PC-9 (cell line): ENCODE measurements at regions of chr3 and their contacts with region 1.

Region 1: DNA sequence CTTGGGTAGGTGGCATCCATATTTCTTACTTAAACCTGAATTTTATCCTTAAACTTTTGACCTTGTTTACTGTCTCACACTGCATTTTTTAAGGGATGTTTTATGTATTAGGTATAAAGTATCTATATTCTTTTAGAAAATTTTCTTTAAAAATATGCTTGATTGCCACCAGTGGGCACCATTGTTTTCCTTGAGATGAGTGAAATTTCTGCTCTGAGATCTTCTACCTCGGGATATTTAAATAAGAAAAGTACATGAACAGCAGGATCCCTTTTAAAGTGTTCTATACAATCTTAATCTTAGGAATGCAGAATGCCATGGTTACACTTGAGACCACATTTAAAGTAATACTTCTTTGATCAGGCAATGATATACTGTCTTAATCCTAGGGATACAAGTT is 108.7 kb downstream of the SLMAP start:
- DNase-seq: no peak
- H3K4me3 ChIP-seq: no peak overlapping the region
- H3K27ac ChIP-seq: 0 out of 2 replicates have a peak overlapping the region, but pooled peaks have one; percentile 9
- H3K4me1 ChIP-seq: no peaks in the 10 kb centered on the region
- H3K27me3 ChIP-seq: no peaks in the 10 kb centered on the region
- CTCF ChIP-seq: peak; percentile 64

Region 2: DNA sequence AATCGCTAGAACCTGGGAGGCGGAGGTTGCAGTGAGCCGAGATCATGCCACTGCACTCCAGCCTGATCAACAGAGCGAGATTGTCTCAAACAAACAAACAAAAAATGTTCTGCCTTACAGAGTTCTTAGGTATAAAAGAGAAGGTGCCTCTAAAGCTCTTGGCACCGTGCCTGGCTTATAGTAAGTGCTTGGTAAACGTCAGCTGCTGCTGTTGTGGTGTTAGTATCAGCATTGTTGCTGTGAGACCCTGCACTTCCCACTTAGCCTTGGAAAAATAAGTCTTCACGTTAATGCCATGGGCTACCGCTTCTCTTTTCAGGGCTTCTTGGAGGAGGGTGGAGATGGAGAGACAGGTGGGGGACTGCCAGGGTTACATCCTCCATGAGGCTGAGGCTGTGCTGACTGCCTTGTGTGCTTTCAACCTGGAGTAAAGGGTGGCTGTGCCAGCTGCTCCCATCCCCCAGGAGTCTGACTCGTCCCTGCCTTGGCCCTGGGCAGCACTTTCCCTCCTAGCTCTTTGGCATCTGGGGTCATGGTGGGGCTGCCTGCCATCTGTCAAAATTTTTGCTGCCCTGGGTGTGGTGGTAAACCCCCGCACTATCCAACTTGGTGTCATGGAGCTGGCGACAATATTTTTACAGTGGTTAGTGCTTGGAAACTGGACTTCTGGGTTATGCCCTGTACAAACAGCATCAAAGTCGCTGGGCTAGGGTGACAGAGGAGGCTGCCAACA is 161.2 kb after region 1 on chr3:
- CTCF ChIA-PET with region 1: no interaction called
- POLR2A ChIA-PET with region 1: no interaction called
- intact Hi-C with region 1: no loop called
- DNase-seq: peak in 1 of 2 experiments; percentile 51
- H3K4me3 ChIP-seq: no peak overlapping the region
- H3K27ac ChIP-seq: peak overlapping the region; percentile 32; the same call in 1 of the 2 replicates
- H3K4me1 ChIP-seq: peaks cover 35% of the 10 kb centered on the region
- H3K27me3 ChIP-seq: no peaks in the 10 kb centered on the region
- CTCF ChIP-seq: no peak

Region 3: GRCh38 chr3:58177747-58178527 is 313.1 kb after region 1 on chr3:
- CTCF ChIA-PET with region 1: no interaction called
- POLR2A ChIA-PET with region 1: no interaction called
- intact Hi-C with region 1: loop called (anchors 10 kb)
- DNase-seq: peak in 1 of 2 experiments; percentile 80
- H3K4me3 ChIP-seq: peak overlapping the region; percentile 46; the same call in 1 of the 2 replicates
- H3K27ac ChIP-seq: no peak overlapping the region
- H3K4me1 ChIP-seq: peaks cover 13% of the 10 kb centered on the region
- H3K27me3 ChIP-seq: no peaks in the 10 kb centered on the region
- CTCF ChIP-seq: peak; percentile 90